ENCODE measurements at regions of chr20 and their contacts with region 1.

Region 1: DNA sequence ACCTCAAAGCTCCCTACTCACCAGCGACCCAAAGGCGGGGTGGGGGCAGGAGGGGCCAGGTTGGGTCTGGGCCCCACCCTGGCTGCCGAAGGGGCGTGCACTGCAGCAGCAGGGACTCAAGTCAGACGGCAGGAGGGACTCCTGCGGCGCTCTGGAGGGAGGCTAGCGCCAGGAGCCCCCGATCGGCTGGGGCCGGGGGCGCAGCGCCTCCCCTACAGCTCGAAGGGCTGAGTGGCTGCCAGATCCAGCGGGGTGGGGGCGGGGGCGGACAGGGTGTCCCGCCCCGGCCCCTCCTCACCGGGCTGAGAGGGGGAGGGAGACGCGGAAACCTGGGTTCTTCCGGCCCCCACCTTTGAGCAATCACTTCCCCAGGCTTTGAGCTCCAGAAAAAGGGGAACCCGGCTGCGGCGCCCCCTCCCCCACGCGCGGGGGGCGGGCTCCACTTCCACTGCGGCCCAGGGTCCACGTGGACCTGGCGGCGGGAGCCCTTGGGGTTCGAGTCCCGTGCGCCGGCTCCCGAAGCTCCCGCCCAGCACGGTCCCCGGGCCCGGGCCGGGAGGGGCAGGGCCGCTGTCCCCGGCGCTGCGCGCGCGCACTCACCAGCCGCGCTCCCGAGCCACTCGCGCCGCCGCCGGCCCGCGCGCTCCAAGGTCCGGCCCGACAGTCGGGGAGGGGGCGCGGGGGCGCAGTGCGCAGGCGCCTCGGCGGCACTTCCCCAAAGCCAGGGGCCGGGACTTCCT is at the start of gene RGS19:
- DNase-seq: peak; percentile 95
- ATAC-seq: peak; percentile 46
- H3K4me3 ChIP-seq: peak within 1 kb of the TSS; percentile 80 to 98 (median 96)
- H3K4me3 Mint-ChIP-seq: peak within 1 kb of the TSS; percentile 87
- H3K27ac ChIP-seq: peak within 1 kb of the TSS; percentile 77 to 94
- H3K27ac Mint-ChIP-seq: peak within 1 kb of the TSS; percentile 93
- H3K4me1 ChIP-seq: peaks cover 46 to 75% of the 10 kb centered on the region in 2 donors
- H3K4me1 Mint-ChIP-seq: peaks cover 57% of the 10 kb centered on the region
- H3K27me3 ChIP-seq: peaks cover 0 to 3% (median under 1%) of the 10 kb centered on the region in 4 experiments
- H3K27me3 Mint-ChIP-seq: no peaks in the 10 kb centered on the region
- CTCF ChIP-seq: no peak
- total RNA-seq, gene RGS19: 69.4 TPM in 2 replicates

Region 2: GRCh38 chr20:63969838-63970713 is 109.4 kb before region 1 on chr20 and contains the start of gene ZNF512B:
- CTCF ChIA-PET with region 1: no interaction called
- POLR2A ChIA-PET with region 1: no interaction called
- intact Hi-C with region 1: no loop called
- DNase-seq: peak; percentile 66
- ATAC-seq: peak; percentile 53
- H3K4me3 ChIP-seq: peak within 1 kb of the TSS in 4 of 5 experiments; percentile 34 to 64 (median 50)
- H3K4me3 Mint-ChIP-seq: peak within 1 kb of the TSS; percentile 86
- H3K27ac ChIP-seq: no peak within 1 kb of the TSS
- H3K27ac Mint-ChIP-seq: peak within 1 kb of the TSS; percentile 61
- H3K4me1 ChIP-seq: peaks cover 13 to 22% of the 10 kb centered on the region in 2 donors
- H3K4me1 Mint-ChIP-seq: peaks cover 17% of the 10 kb centered on the region
- H3K27me3 ChIP-seq: no peaks in the 10 kb centered on the region
- H3K27me3 Mint-ChIP-seq: no peaks in the 10 kb centered on the region
- CTCF ChIP-seq: no peak
- total RNA-seq, gene ZNF512B: 10.4 and 10.5 TPM in 2 replicates

Region 3: DNA sequence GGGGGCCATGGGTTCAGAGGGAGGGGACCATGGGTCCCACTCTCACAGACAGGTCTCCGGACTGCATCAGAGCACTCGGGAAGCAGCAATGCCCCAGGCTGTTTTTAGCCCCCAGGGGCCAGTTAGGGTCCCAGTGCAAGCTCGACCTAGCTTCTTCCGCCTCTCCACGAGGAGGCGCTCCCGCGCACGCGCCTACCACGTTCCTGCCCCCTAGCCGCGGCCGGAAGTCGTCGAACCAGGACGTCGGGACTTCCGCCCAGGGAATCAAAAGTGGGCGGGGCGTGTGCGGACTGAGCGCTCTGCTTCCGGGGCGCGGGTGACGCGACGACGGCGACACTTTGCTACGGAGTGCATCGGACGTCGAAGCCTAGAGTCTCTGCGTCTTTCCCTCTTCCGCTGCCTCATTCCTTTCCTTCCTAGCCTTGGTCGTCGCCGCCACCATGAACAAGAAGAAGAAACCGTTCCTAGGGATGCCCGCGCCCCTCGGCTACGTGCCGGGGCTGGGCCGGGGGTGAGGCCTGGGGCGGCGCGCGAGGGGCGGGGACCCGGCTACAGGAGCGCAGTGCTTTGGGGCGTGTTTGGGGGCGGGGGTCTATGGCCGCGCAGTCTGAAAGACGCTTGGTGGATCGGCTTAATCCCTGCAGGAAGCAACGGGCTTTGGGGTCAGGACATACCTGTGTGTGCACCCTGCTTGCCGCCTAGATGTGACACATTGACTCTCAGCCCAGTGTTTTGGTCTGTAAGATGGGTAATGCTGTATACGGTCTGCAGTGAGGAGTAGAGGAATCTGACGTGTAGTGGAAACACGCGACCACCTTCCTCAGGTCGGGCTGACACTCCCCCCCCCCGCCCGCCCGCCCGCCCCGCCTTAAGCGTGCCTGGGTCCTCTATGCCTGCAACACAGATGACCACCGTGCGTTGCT is 98.4 kb before region 1 on chr20 and contains the start of gene PRPF6:
- CTCF ChIA-PET with region 1: interaction called, 7 read pairs
- POLR2A ChIA-PET with region 1: interaction called, 5 read pairs
- intact Hi-C with region 1: loop called (anchors 5 kb)
- DNase-seq: peak; percentile 96
- ATAC-seq: peak; percentile 72
- H3K4me3 ChIP-seq: peak within 1 kb of the TSS; percentile 63 to 85 (median 79)
- H3K4me3 Mint-ChIP-seq: peak within 1 kb of the TSS; percentile 90
- H3K27ac ChIP-seq: peak within 1 kb of the TSS; percentile 69 to 87
- H3K27ac Mint-ChIP-seq: peak within 1 kb of the TSS; percentile 94
- H3K4me1 ChIP-seq: peaks cover 30 to 46% of the 10 kb centered on the region in 2 donors
- H3K4me1 Mint-ChIP-seq: peaks cover 53% of the 10 kb centered on the region
- H3K27me3 ChIP-seq: no peaks in the 10 kb centered on the region
- H3K27me3 Mint-ChIP-seq: no peaks in the 10 kb centered on the region
- CTCF ChIP-seq: peak; percentile 86
- total RNA-seq, gene PRPF6: 79.7 and 82.9 TPM in 2 replicates

Region 4: GRCh38 chr20:64062596-64063388 is 16.7 kb before region 1 on chr20 and contains the start of gene TCEA2:
- CTCF ChIA-PET with region 1: interaction called, 14 read pairs
- POLR2A ChIA-PET with region 1: interaction called, 55 read pairs
- intact Hi-C with region 1: loop called (anchors 1 kb)
- DNase-seq: peak; percentile 93
- ATAC-seq: peak; percentile 83
- H3K4me3 ChIP-seq: peak within 1 kb of the TSS in 4 of 5 experiments; percentile 63 to 79 (median 70)
- H3K4me3 Mint-ChIP-seq: peak within 1 kb of the TSS; percentile 88
- H3K27ac ChIP-seq: peak within 1 kb of the TSS; percentile 34 to 69
- H3K27ac Mint-ChIP-seq: peak within 1 kb of the TSS; percentile 86
- H3K4me1 ChIP-seq: peaks cover 54 to 63% of the 10 kb centered on the region in 2 donors
- H3K4me1 Mint-ChIP-seq: peaks cover 52% of the 10 kb centered on the region
- H3K27me3 ChIP-seq: no peaks in the 10 kb centered on the region
- H3K27me3 Mint-ChIP-seq: no peaks in the 10 kb centered on the region
- CTCF ChIP-seq: no peak
- total RNA-seq, gene TCEA2: 49.3 and 58.1 TPM in 2 replicates

Region 5: GRCh38 chr20:64106981-64107735 is 27.7 kb after region 1 on chr20 and contains the start of gene NPBWR2:
- CTCF ChIA-PET with region 1: interaction called, 76 read pairs
- POLR2A ChIA-PET with region 1: interaction called, 8 read pairs
- intact Hi-C with region 1: no loop called
- DNase-seq: peak; percentile 64
- ATAC-seq: peak; percentile 70
- H3K4me3 ChIP-seq: peak within 1 kb of the TSS in 3 of 5 experiments; percentile 19 to 24 (median 21)
- H3K4me3 Mint-ChIP-seq: peak within 1 kb of the TSS; percentile 80
- H3K27ac ChIP-seq: peak within 1 kb of the TSS; percentile 66 to 78
- H3K27ac Mint-ChIP-seq: peak within 1 kb of the TSS; percentile 92
- H3K4me1 ChIP-seq: peaks cover 20 to 45% of the 10 kb centered on the region in 2 donors
- H3K4me1 Mint-ChIP-seq: peaks cover 36% of the 10 kb centered on the region
- H3K27me3 ChIP-seq: peaks cover 0 to 14% (median 0%) of the 10 kb centered on the region in 4 experiments
- H3K27me3 Mint-ChIP-seq: no peaks in the 10 kb centered on the region
- CTCF ChIP-seq: no peak
- total RNA-seq, gene NPBWR2: 0.22 TPM in 1 of 2 replicates, not detected in the other

Measured in B cell (primary cell).